ENCODE measurements at regions of chr20 and their contacts with region 1.

Region 1: DNA sequence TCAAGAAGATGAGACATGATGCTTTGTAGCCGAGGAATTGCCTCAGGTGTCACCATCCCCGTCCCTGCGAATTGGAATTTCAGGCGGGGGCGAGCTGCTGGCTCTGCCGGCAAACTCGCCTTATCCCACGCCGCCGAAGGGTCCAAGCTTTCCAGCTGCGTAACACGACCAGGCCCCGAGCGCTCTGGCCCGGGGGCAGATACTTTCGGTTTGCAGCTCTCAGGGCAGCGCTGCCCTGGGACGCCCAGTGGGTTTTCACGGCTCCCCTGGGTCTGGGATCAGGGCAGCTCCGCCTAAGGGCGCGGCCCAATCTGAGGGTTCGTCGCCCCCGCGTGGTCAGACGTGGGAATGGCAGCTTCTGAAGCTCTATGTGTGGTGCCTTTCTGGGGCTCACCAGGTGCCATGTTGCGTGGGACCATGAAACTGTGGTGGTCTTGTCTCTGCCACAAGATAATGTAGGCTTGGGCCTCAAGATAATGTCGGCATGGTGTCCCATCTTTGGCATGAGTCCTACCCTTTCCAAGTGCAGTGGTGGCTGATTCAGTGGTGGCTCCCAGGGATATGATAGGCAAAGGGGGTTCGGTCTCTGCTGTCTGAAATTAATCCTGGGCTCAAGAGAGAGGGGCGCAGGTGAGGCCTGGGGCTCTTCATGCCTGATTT is 20.9 kb downstream of the PIGT start:
- DNase-seq: peak; percentile 80 to 84 (median 81)
- H3K4me3 ChIP-seq: peak overlapping the region; percentile 59 to 60
- H3K4me3 Mint-ChIP-seq: peak overlapping the region; percentile 80 to 88 (median 84)
- H3K27ac ChIP-seq: peak overlapping the region; percentile 32
- H3K27ac Mint-ChIP-seq: peak overlapping the region; percentile 37 to 88 (median 64)
- H3K4me1 ChIP-seq: peaks cover 15% of the 10 kb centered on the region
- H3K4me1 Mint-ChIP-seq: peaks cover 5 to 18% (median 6%) of the 10 kb centered on the region in 4 donors
- H3K27me3 ChIP-seq: no peaks in the 10 kb centered on the region
- H3K27me3 Mint-ChIP-seq: no peaks in the 10 kb centered on the region

Region 2: GRCh38 chr20:45279992-45280391 is 156.9 kb before region 1 on chr20:
- CTCF ChIA-PET with region 1: no interaction called
- POLR2A ChIA-PET with region 1: no interaction called
- intact Hi-C with region 1: no loop called
- DNase-seq: no peak
- H3K4me3 ChIP-seq: no peak overlapping the region
- H3K4me3 Mint-ChIP-seq: no peak overlapping the region
- H3K27ac ChIP-seq: no peak overlapping the region
- H3K27ac Mint-ChIP-seq: no peak overlapping the region
- H3K4me1 ChIP-seq: no peaks in the 10 kb centered on the region
- H3K4me1 Mint-ChIP-seq: no peaks in the 10 kb centered on the region
- H3K27me3 ChIP-seq: no peaks in the 10 kb centered on the region
- H3K27me3 Mint-ChIP-seq: peaks cover 25 to 29% of the 10 kb centered on the region in 2 donors

Region 3: GRCh38 chr20:45293041-45294002 is 143.5 kb before region 1 on chr20:
- CTCF ChIA-PET with region 1: interaction called, 13 read pairs
- POLR2A ChIA-PET with region 1: no interaction called
- intact Hi-C with region 1: no loop called
- DNase-seq: peak; percentile 70 to 77 (median 71)
- H3K4me3 ChIP-seq: peak overlapping the region; percentile 40 to 64
- H3K4me3 Mint-ChIP-seq: peak overlapping the region; percentile 68 to 84 (median 79)
- H3K27ac ChIP-seq: no peak overlapping the region
- H3K27ac Mint-ChIP-seq: no peak overlapping the region
- H3K4me1 ChIP-seq: peaks cover 11% of the 10 kb centered on the region
- H3K4me1 Mint-ChIP-seq: peaks cover 2 to 8% (median 4%) of the 10 kb centered on the region in 4 donors
- H3K27me3 ChIP-seq: no peaks in the 10 kb centered on the region
- H3K27me3 Mint-ChIP-seq: peaks cover 9 to 30% of the 10 kb centered on the region in 2 donors

Region 4: DNA sequence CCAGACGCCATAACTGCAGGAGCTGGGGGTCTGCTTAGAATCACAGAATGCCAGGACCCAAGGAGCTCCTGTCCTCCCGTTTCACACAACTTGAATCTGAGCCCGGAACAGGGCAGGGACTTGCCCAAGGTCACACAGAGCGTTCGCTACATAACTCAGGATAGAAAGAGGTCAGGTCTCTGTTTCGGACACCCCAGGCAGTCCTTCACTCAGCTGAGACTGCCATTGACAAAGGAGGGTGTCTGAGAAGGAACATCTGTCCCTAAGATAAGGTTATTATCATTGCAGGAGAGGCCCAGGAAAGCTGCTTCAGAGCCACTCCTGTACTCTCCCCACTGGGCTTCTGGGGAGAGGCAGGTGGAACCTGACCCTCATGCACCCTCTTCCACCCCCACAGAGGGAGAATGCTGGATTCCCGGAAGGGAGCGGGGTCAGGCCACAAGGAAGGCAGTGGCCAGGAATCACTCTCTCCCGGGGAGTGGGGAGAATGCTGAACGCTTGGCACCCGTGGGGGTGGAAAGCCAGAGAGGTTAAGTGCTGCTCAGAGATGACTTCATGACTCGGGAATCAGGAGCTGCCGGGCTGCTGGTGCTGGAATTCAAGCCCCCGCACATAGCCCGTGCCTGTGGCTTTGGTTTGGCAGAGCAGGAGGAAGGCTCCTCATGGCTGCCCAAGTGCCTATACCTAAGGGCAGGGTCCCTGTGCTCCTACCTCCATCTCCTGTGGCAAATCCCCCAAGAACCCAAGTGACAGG is 99.3 kb before region 1 on chr20:
- CTCF ChIA-PET with region 1: interaction called, 11 read pairs
- POLR2A ChIA-PET with region 1: no interaction called
- intact Hi-C with region 1: no loop called
- DNase-seq: no peak
- H3K4me3 ChIP-seq: no peak overlapping the region
- H3K4me3 Mint-ChIP-seq: no peak overlapping the region
- H3K27ac ChIP-seq: no peak overlapping the region
- H3K27ac Mint-ChIP-seq: peak overlapping the region in 1 of 7 donors; percentile 36
- H3K4me1 ChIP-seq: no peaks in the 10 kb centered on the region
- H3K4me1 Mint-ChIP-seq: no peaks in the 10 kb centered on the region
- H3K27me3 ChIP-seq: no peaks in the 10 kb centered on the region
- H3K27me3 Mint-ChIP-seq: no peaks in the 10 kb centered on the region

Region 5: DNA sequence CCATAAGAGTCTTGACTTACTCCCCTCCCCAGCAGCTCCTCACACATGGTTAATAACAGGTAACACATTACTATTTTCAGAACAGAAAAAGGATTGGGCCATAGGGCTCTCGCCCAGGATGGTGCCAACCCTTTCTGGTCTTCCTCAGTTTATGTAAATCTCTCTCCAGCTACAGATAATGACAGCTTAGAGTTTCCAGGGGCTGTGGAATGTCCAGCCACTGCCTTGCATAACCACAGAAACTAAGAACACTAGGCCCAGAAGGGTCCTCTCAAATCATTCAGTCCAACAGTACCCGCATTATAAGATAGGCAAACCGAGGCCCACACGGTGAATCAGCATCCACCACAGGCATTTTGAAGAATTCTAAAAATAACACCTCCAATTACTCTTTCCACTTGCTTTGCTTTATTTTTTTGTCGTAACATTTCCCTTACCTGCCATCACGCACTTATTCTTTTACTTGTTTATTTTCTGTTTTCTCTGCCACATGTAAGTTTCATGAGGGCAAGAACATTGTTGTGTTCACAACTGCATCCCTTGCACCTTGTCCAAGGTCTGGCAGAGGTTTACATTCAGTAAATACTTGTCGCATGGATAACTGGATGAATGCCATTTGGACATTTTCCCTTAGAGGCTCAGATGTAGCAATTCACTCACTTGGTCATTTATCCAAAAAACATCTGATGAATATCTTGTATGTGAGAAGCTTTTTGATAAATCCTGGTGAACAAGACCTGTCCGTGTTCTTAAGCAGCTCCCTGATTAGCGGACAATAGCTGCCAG is 82.2 kb before region 1 on chr20:
- CTCF ChIA-PET with region 1: interaction called, 543 read pairs
- POLR2A ChIA-PET with region 1: interaction called, 4 read pairs
- intact Hi-C with region 1: no loop called
- DNase-seq: no peak
- H3K4me3 ChIP-seq: no peak overlapping the region
- H3K4me3 Mint-ChIP-seq: peak overlapping the region in 1 of 8 donors; percentile 61
- H3K27ac ChIP-seq: no peak overlapping the region
- H3K27ac Mint-ChIP-seq: peak overlapping the region in 5 of 7 donors; percentile 14 to 73 (median 63)
- H3K4me1 ChIP-seq: peaks cover 28% of the 10 kb centered on the region
- H3K4me1 Mint-ChIP-seq: peaks cover 13 to 54% (median 33%) of the 10 kb centered on the region in 4 donors
- H3K27me3 ChIP-seq: no peaks in the 10 kb centered on the region
- H3K27me3 Mint-ChIP-seq: no peaks in the 10 kb centered on the region

Region 6: DNA sequence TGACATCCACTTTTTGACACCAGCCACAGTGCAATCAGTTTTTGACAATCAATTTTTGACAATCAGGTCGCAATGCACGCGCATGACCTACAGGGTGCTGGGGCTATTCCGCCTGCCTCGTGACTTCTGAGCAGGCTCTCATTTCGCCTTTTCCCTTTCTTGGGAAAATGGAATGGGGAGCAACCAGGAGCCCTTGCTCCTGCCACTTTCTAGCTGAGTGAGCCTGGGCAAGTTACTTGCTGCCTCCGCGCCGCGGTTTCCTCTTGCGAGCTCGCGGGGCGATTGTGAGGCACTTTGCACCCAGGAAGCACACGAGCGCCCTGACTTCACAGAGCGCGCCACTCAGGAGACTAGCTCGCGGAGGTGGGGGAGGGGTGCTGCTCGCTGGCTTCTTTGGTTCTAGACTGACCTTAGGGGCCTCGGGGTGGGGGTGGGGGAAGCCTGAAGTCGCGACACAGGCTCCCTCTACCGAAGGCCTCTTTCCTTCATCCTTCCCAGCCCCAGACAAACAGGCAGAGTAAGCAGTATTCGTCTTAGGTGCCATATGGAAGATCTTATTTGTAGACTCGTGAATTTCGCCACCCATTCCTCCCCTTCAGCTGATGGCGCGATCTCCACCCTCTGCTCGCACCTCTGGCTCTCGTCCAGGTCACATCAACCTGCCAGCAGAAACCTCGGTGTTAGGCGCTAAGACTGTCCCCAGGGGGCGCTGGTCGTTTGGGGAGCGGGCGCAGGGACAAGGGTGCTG is 63.3 kb before region 1 on chr20:
- CTCF ChIA-PET with region 1: interaction called, 543 read pairs
- POLR2A ChIA-PET with region 1: interaction called, 60 read pairs
- intact Hi-C with region 1: loop called (anchors 1 kb)
- DNase-seq: peak; percentile 86 to 90 (median 87)
- H3K4me3 ChIP-seq: peak overlapping the region; percentile 60 to 71
- H3K4me3 Mint-ChIP-seq: peak overlapping the region; percentile 87 to 95 (median 90)
- H3K27ac ChIP-seq: peak overlapping the region; percentile 63
- H3K27ac Mint-ChIP-seq: peak overlapping the region; percentile 91 to 98 (median 95)
- H3K4me1 ChIP-seq: peaks cover 22% of the 10 kb centered on the region
- H3K4me1 Mint-ChIP-seq: peaks cover 14 to 44% (median 32%) of the 10 kb centered on the region in 4 donors
- H3K27me3 ChIP-seq: no peaks in the 10 kb centered on the region
- H3K27me3 Mint-ChIP-seq: no peaks in the 10 kb centered on the region

Region 7: GRCh38 chr20:45415774-45416637 is 20.9 kb before region 1 on chr20 and contains the start of gene PIGT:
- CTCF ChIA-PET with region 1: interaction called, 31 read pairs
- POLR2A ChIA-PET with region 1: interaction called, 22 read pairs
- intact Hi-C with region 1: loop called (anchors 1 kb)
- DNase-seq: peak; percentile 91 to 96 (median 93)
- H3K4me3 ChIP-seq: peak within 1 kb of the TSS; percentile 51 to 87
- H3K4me3 Mint-ChIP-seq: peak within 1 kb of the TSS; percentile 95 to 99 (median 96)
- H3K27ac ChIP-seq: peak within 1 kb of the TSS; percentile 91
- H3K27ac Mint-ChIP-seq: peak within 1 kb of the TSS; percentile 96 to 99 (median 98)
- H3K4me1 ChIP-seq: peaks cover 27% of the 10 kb centered on the region
- H3K4me1 Mint-ChIP-seq: peaks cover 23 to 51% (median 35%) of the 10 kb centered on the region in 4 donors
- H3K27me3 ChIP-seq: no peaks in the 10 kb centered on the region
- H3K27me3 Mint-ChIP-seq: no peaks in the 10 kb centered on the region
- total RNA-seq, gene PIGT: 81.9 to 84.5 TPM

Region 8: DNA sequence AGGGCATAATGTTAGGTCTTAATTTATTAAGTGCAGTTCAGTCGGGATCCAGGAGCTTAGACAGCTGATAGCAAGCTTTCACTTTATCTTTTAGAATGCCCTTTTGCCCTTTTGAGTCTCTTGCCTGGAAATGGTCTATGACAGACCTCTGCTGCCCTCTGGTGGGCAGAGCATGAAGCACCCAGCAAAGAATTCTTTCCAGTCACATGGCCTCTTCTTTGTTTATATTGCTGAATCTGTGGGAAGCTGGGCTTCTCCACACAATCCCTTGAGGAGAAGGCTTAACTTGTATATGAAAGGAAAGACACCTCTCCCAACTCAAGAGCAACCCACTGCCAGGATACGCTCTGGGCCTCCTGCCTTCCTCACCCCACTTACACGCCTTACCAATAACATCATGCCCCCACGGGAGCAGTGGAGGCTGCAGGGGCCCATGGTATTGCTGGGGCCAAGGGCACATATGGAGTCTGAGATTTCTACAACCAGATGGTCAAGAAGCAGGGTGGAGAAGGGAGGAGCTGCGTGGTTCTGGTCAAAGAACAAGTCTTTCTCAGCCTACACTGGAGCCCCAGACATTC is 334.4 kb after region 1 on chr20:
- CTCF ChIA-PET with region 1: interaction called, 21 read pairs
- POLR2A ChIA-PET with region 1: no interaction called
- intact Hi-C with region 1: loop called (anchors 5 kb)
- DNase-seq: peak; percentile 73 to 79 (median 75)
- H3K4me3 ChIP-seq: no peak overlapping the region
- H3K4me3 Mint-ChIP-seq: peak overlapping the region in 1 of 8 donors; percentile 21
- H3K27ac ChIP-seq: no peak overlapping the region
- H3K27ac Mint-ChIP-seq: peak overlapping the region in 1 of 7 donors; percentile 61
- H3K4me1 ChIP-seq: no peaks in the 10 kb centered on the region
- H3K4me1 Mint-ChIP-seq: peaks cover 1 to 7% (median 4%) of the 10 kb centered on the region in 4 donors
- H3K27me3 ChIP-seq: no peaks in the 10 kb centered on the region
- H3K27me3 Mint-ChIP-seq: peaks cover 10 to 23% of the 10 kb centered on the region in 2 donors